ENCODE measurements at regions of chr1 and their contacts with region 1.

Region 1: DNA sequence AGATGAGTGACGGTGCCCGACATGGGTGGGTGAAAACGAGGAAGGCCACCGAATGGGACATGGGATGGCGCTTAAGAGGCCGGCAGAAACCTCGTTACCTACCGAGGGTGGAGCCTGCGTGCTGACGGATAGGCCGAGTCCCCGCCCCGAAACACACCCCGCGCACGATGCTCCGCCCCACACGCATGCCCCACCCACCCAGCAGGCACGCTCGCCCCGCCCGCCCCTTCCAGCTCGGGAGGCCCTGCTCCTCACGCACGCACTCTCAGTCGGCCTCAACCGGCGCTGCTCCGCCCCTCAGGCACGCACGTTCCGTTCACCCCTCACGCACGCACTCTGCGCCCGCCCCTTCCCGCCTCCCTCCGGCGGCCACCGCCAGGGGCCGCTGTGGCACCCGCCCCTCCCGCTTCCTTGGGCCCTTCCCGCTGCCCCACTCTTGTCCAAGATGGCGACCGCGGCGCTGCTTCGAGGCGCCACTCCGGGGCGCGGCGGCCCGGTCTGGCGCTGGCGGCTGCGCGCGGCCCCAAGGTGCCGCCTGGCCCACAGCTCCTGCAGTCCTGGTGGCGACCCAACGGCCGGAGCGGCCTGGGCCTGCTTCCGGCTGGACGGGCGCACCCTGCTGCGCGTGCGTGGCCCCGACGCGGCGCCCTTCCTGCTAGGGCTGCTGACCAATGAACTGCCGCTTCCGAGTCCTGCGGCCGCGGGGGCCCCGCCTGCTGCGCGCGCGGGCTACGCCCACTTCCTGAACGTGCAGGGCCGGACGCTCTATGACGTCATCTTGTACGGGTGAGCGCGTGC is at the start of gene IBA57:
- DNase-seq: peak; percentile 99
- H3K4me3 Mint-ChIP-seq: peak within 1 kb of the TSS; percentile 83
- H3K27ac Mint-ChIP-seq: peak within 1 kb of the TSS; percentile 96
- H3K4me1 Mint-ChIP-seq: peaks cover 41% of the 10 kb centered on the region
- H3K27me3 Mint-ChIP-seq: no peaks in the 10 kb centered on the region
- total RNA-seq, gene IBA57: 6.4 to 8.2 TPM

Region 2: DNA sequence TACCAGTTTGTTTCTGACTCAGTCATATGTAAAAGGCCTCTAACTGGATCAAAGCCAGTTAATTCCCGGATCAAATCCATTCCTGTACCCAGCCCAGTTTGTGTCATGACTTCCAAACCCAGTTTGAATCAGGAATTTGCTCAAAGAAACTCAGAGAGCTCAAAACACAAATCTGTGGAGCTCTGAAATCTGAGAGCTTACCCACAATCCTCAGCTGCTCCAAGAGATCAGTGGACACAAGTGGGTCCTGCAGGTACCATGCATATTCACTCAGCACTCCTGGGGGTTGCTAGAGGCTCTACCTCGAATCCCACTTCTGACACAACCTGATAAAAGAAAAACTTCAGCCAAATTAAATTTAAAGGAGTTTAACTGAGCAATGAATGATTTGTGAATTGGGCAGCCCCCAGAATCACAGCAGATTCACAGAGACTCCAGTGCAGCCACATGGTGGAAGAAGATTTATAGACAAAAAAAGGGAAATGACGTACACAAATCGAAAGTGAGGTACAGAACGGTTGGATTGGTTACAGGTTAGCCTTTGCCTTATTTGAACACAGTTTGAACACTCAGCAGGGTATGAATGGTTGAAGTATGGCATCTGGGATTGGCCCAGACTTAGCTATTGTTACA is 44.6 kb before region 1 on chr1:
- CTCF ChIA-PET with region 1: interaction called, 12 read pairs
- POLR2A ChIA-PET with region 1: no interaction called
- DNase-seq: no peak
- H3K4me3 Mint-ChIP-seq: no peak overlapping the region
- H3K27ac Mint-ChIP-seq: peak overlapping the region; percentile 41
- H3K4me1 Mint-ChIP-seq: peaks cover 11% of the 10 kb centered on the region
- H3K27me3 Mint-ChIP-seq: no peaks in the 10 kb centered on the region

Region 3: DNA sequence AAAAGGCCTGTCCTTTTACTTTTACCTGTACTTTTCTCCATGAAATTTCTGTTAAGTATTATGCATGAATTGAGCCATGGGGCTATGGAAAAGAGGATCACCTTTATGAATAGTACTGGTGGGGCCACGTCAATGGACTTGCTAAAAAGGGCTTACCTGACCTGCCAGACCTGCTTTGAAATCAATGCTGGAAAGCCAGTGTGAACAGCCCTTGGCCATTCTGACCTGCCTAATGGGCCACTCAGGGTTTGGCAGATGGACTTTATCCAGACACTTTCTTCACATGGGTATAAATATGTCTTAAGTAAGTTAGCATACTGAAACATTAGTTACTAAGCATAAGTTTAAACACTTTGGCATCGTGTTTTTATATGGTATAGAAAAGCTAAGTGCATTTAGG is 33.8 kb before region 1 on chr1:
- CTCF ChIA-PET with region 1: interaction called, 104 read pairs
- POLR2A ChIA-PET with region 1: no interaction called
- DNase-seq: no peak
- H3K4me3 Mint-ChIP-seq: no peak overlapping the region
- H3K27ac Mint-ChIP-seq: no peak overlapping the region
- H3K4me1 Mint-ChIP-seq: peaks cover 11% of the 10 kb centered on the region
- H3K27me3 Mint-ChIP-seq: peaks cover 21% of the 10 kb centered on the region

Region 4: GRCh38 chr1:228139944-228140656 is 25.5 kb before region 1 on chr1 and contains the start of gene GUK1:
- CTCF ChIA-PET with region 1: interaction called, 104 read pairs
- POLR2A ChIA-PET with region 1: no interaction called
- DNase-seq: peak; percentile 100
- H3K4me3 Mint-ChIP-seq: peak within 1 kb of the TSS; percentile 99
- H3K27ac Mint-ChIP-seq: peak within 1 kb of the TSS; percentile 100
- H3K4me1 Mint-ChIP-seq: peaks cover 41% of the 10 kb centered on the region
- H3K27me3 Mint-ChIP-seq: peaks cover 21% of the 10 kb centered on the region
- total RNA-seq, gene GUK1: 207 to 260 TPM

Region 5: GRCh38 chr1:228150461-228151179 is 15.0 kb before region 1 on chr1:
- CTCF ChIA-PET with region 1: interaction called, 104 read pairs
- POLR2A ChIA-PET with region 1: no interaction called
- DNase-seq: no peak
- H3K4me3 Mint-ChIP-seq: no peak overlapping the region
- H3K27ac Mint-ChIP-seq: no peak overlapping the region
- H3K4me1 Mint-ChIP-seq: peaks cover 9% of the 10 kb centered on the region
- H3K27me3 Mint-ChIP-seq: no peaks in the 10 kb centered on the region

Region 6: DNA sequence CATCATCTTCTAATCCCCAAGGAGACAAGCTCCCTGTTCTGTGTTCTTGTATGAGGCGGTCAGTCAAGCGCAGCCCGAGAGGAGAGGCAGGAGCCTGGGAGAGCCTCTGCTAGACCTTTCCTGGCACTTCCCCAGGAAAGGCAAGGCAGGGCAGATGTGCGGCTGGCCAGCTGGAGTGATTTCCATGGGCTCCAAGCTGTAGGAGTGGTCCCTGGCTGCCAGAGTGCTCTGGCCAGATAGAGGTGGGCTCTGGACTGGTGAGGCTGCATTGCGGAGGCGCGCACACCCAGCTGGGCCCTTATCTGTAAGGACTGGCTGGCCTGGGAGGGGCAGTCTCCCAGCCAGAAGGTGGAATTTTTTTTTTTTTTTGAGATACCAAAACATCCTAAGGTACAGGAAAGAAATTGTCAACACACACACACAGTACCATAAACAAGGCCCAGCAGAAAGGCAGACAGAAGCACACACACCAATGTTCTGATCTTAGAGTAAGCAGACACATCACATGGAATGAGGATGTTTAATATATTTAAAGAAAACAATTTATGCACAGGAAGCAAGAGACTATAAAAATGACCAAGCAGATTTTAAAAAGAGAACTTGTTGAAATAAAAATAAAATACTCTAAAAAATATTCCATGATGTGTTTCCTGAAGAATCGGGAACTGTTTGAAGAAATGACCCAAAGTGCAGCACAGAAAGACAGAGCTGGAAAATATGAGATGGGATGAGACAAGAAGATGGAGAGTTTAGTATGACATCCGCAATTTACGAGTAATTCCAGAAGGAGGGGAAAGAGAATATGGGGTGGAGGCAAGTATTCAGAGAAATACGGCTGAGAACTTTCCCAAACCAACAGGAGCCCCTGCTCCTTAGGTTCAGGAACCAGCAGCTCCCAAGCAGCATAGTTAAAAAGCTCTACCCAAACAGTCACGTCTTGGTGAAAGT is 13.4 kb after region 1 on chr1:
- CTCF ChIA-PET with region 1: interaction called, 18 read pairs
- POLR2A ChIA-PET with region 1: no interaction called
- DNase-seq: no peak
- H3K4me3 Mint-ChIP-seq: no peak overlapping the region
- H3K27ac Mint-ChIP-seq: no peak overlapping the region
- H3K4me1 Mint-ChIP-seq: peaks cover 2% of the 10 kb centered on the region
- H3K27me3 Mint-ChIP-seq: no peaks in the 10 kb centered on the region

Measured in activated CD4-positive, alpha-beta T cell treated with anti-CD3 and anti-CD28 coated beads, Interleukin-2, amount 10 ng/mL, durations not matched to agents 7 days and 5 days (primary cell).